ENCODE measurements at regions of chr17 and their contacts with region 1.

Region 1: DNA sequence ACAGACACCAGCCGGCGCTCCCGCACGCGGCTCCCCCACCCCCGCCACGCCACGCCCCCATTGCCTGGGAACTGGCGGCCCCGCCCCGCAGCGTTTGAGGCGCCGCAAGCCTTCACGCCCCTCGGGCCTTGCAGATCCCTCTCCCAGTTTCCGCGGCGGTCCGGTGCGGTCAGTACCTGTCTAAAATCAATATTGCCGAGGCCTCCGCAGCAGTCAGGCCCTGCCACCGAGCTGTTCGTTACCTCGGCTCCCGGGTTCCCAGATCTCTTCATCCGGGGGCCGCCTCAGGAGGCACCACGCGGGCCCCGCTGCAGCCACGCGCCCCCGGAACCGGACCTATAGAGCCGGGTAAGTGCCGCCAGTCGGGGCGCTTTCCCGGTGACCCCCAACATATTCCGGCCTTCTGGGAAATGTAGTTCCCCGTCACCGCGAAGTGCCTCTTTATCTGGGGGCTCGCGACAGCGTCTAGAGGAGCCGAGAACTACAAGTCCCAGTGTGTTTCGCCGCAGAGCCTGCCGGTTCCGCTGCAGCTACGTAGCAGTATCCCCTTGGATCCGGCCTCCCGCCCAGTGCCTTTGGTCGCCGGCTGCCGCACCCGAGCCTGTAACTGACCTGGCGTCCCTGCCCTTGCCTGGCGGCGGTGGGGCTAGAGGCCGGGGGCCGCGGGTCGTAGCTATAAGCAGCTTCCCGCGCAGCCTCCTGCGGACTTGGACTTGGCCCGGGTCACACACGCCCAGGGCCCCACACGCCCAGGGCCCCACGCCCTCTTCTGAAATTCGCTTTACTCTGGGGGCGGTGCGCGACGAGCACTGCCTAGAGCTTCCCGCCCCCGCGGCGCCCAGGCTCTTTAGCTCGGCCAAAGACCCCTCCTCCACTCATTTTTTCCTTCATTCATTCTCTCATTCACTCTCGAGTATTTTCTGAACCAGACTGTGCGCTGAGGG is at the start of gene PEMT:
- DNase-seq: peak; percentile 90
- H3K4me3 Mint-ChIP-seq: peak within 1 kb of the TSS; percentile 98
- H3K27ac Mint-ChIP-seq: peak within 1 kb of the TSS; percentile 94
- H3K4me1 Mint-ChIP-seq: peaks cover 18% of the 10 kb centered on the region
- H3K27me3 Mint-ChIP-seq: no peaks in the 10 kb centered on the region
- total RNA-seq, gene PEMT: 39.9 and 45.1 TPM in 2 replicates

Region 2: DNA sequence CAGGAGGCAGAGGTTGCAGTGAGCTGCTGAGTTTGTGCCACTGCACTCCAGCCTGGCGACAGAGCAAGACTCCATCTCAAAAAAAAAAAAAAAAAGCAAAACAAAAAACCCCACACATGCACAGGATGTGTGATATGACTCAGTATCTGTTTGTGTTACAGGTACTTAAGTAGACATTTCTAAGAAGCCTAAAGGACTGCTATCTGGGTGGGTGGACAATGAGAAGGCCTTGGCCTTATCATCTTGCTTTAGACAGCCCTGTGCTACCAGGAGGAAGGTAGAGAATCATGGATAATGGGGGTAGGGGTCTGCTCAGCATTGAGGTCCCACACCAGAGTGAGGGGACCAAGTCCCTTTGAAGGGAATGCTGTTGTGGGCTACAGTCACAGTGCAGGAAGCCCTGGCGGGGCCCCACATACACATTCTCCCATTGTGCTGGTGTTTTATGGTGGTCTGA is 412.2 kb before region 1 on chr17:
- intact Hi-C with region 1: loop called (anchors 5 kb)
- DNase-seq: peak; percentile 39
- H3K4me3 Mint-ChIP-seq: peak overlapping the region; percentile 84
- H3K27ac Mint-ChIP-seq: peak overlapping the region; percentile 97
- H3K4me1 Mint-ChIP-seq: peaks cover 76% of the 10 kb centered on the region
- H3K27me3 Mint-ChIP-seq: no peaks in the 10 kb centered on the region

Region 3: DNA sequence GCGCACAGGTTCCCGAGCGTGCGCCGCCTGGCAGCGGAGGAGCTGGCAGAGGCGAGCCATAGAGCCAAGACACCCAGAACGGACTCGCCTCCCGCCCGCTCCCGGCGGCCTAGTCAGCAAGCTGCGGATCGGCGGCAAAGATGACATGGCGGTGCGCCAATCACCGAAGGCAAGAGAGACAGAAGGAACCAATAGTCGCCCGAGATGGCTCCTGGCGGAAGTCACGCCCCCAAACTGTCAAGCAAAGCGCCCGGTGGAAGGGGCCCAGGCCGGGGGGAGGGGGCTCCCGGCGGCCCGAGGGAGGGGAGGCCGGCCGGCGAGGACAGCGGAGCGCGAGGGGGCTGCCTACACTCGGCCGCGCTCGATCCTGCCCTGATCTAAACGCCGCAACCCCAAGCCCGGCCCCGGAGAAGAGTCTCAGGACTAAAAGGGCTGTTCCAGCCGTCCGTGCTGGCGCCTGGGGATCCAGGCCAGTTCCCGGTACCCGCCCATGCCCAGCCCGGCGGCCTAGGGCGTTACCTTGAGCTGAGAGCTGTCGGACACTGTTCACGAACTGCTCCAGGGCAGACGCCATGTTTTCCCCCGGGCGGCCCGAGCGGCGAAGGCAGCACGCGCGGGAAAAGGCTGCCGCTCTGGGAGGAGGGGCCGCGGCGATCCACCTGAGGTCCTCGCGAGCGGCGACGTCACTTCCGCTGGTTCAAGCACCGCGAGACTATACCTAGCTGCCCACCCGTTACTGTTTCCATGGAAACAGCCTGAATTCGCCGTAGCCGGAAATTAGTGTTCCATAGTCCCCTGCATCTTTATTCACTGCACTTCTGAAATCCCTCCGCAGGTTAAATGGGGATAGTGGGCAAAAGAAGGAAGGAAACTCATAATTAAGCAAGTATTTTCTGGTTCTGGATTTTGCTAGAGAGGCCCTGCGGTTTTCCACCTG is 310.7 kb before region 1 on chr17 and contains the start of gene COPS3:
- intact Hi-C with region 1: loop called (anchors 1 kb)
- DNase-seq: peak; percentile 95
- H3K4me3 Mint-ChIP-seq: peak within 1 kb of the TSS; percentile 91
- H3K27ac Mint-ChIP-seq: peak within 1 kb of the TSS; percentile 94
- H3K4me1 Mint-ChIP-seq: peaks cover 36% of the 10 kb centered on the region
- H3K27me3 Mint-ChIP-seq: no peaks in the 10 kb centered on the region
- total RNA-seq, gene COPS3: 122 and 131 TPM in 2 replicates

Region 4: DNA sequence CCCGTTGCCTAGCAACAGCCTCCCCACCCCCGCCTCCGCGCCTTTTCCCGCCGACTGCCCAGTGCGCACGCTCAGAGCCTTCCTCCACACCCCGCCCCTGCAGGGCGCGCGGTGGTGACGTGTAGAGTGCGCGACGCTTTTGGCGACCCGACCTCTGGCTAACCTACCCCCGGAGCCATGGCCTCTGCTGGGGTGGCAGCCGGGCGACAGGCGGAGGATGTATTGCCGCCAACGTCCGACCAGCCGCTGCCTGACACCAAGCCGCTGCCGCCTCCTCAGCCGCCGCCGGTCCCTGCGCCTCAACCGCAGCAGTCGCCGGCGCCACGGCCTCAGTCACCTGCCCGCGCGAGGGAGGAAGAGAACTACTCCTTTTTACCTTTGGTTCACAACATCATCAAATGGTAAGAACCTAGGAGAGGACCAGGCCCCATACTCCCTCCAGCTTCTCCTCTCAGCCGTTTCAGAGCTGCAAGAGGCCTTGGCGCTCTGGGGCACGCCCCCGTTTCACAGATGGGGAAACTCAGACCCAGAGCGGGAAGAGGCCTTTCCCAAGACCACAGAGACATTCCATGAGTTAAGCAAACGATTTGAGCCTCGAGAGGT is 114.7 kb before region 1 on chr17 and contains the start of gene MED9:
- intact Hi-C with region 1: loop called (anchors 1 kb)
- DNase-seq: peak; percentile 91
- H3K4me3 Mint-ChIP-seq: peak within 1 kb of the TSS; percentile 95
- H3K27ac Mint-ChIP-seq: peak within 1 kb of the TSS; percentile 90
- H3K4me1 Mint-ChIP-seq: peaks cover 49% of the 10 kb centered on the region
- H3K27me3 Mint-ChIP-seq: peaks cover 16% of the 10 kb centered on the region
- total RNA-seq, gene MED9: 13.8 and 15.2 TPM in 2 replicates

Region 5: GRCh38 chr17:17628388-17629008 is 36.9 kb after region 1 on chr17:
- intact Hi-C with region 1: loop called (anchors 1 kb)
- DNase-seq: peak; percentile 44
- H3K4me3 Mint-ChIP-seq: peak overlapping the region; percentile 83
- H3K27ac Mint-ChIP-seq: peak overlapping the region; percentile 93
- H3K4me1 Mint-ChIP-seq: peaks cover 12% of the 10 kb centered on the region
- H3K27me3 Mint-ChIP-seq: no peaks in the 10 kb centered on the region

Region 6: GRCh38 chr17:18314731-18315561 is 723.3 kb after region 1 on chr17 and contains the starts of genes SMCR8 and TOP3A:
- intact Hi-C with region 1: loop called (anchors 5 kb)
- DNase-seq: peak; percentile 95
- H3K4me3 Mint-ChIP-seq: peak within 1 kb of the TSS; percentile 93
- H3K27ac Mint-ChIP-seq: peak within 1 kb of the TSS; percentile 100
- H3K4me1 Mint-ChIP-seq: peaks cover 75% of the 10 kb centered on the region
- H3K27me3 Mint-ChIP-seq: peaks cover 2% of the 10 kb centered on the region
- total RNA-seq, gene SMCR8: 18.7 and 19.2 TPM in 2 replicates
- total RNA-seq, gene TOP3A: 75.2 and 87.2 TPM in 2 replicates

Measured in activated T-helper 1 cell treated with anti-CD3 and anti-CD28 coated beads, Interleukin-12 subunit alpha, Interleukin-12 subunit beta, Interleukin-2, Interleukin-4 antibody, amounts not matched to agents 30 ng/mL and 10 ng/mL and 1 ng/mL, durations not matched to agents 14 hours and 24 hours and 36 hours (primary cell).